Naive thymus-derived CD4-positive, alpha-beta T cell (primary cell): ENCODE measurements at regions of chr5 and their contacts with region 1.

Region 1: DNA sequence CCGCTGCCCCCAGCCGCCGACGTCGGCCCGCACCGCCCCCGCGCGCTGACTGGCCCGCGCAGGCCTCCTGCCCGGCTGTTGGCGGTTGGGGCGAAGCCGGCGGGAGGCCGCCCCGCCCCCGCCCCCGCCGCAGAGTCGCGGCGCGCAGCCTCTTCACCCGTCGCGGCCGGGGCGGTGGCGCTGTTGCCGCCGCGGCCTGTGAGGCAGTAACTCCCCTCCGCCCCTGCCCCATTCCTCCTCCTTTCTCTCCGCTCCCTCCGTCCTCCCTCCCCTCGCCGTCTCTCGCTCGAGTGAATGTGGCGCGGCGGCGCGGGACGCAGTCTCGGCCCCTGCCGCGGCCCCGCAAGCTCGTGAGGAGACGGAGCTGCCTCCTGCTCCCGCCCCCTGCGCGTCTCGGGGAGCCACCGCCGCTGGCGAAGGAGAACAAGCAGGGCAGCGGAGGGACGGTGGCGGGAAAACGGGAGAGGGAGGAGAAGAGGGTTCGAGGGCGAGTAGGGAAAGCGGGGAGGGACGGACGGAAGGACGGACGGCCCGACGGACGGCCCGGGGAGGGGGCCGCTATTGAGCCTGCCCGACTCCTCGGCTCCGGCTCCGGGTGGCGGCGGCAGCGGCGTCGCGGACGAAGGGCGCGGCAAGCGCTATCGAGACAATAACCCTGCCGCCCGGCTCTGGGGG is 637 bp upstream of the ERBIN start:
- DNase-seq: peak; percentile 72 to 85 (median 81)
- ATAC-seq: peak; percentile 87
- H3K4me3 ChIP-seq: peak overlapping the region; percentile 81
- H3K4me3 Mint-ChIP-seq: peak overlapping the region; percentile 88 to 98 (median 93)
- H3K27ac ChIP-seq: peak overlapping the region; percentile 96
- H3K27ac Mint-ChIP-seq: peak overlapping the region; percentile 64 to 97 (median 95)
- H3K4me1 ChIP-seq: peaks cover 17 to 19% of the 10 kb centered on the region in 2 donors
- H3K4me1 Mint-ChIP-seq: peaks cover 29 to 43% (median 40%) of the 10 kb centered on the region in 7 donors
- H3K27me3 ChIP-seq: no peaks in the 10 kb centered on the region
- H3K27me3 Mint-ChIP-seq: peaks cover 0 to 29% (median 0%) of the 10 kb centered on the region in 5 donors

Region 2: GRCh38 chr5:64768358-64769312 is 1157.1 kb before region 1 on chr5 and contains the starts of genes CWC27 and SREK1IP1:
- CTCF ChIA-PET with region 1: no interaction called
- POLR2A ChIA-PET with region 1: no interaction called
- intact Hi-C with region 1: loop called in 1 of 2 experiments (anchors 5 kb)
- DNase-seq: peak; percentile 65 to 88 (median 83)
- ATAC-seq: peak; percentile 98
- H3K4me3 ChIP-seq: peak within 1 kb of the TSS; percentile 90
- H3K4me3 Mint-ChIP-seq: peak within 1 kb of the TSS; percentile 94 to 100 (median 99)
- H3K27ac ChIP-seq: peak within 1 kb of the TSS; percentile 88
- H3K27ac Mint-ChIP-seq: peak within 1 kb of the TSS; percentile 96 to 100 (median 98)
- H3K4me1 ChIP-seq: peaks cover 21 to 37% of the 10 kb centered on the region in 2 donors
- H3K4me1 Mint-ChIP-seq: peaks cover 34 to 80% (median 77%) of the 10 kb centered on the region in 7 donors
- H3K27me3 ChIP-seq: no peaks in the 10 kb centered on the region
- H3K27me3 Mint-ChIP-seq: no peaks in the 10 kb centered on the region
- total RNA-seq, gene CWC27: 17.8 to 27.4 (median 21.0) TPM
- total RNA-seq, gene SREK1IP1: 11.7 to 29.9 (median 21.7) TPM

Region 3: GRCh38 chr5:65721720-65722574 is 203.8 kb before region 1 on chr5 and contains the starts of genes NLN and SGTB:
- CTCF ChIA-PET with region 1: interaction called, 3 read pairs
- POLR2A ChIA-PET with region 1: interaction called, 40 read pairs
- intact Hi-C with region 1: loop called (anchors 1 kb)
- DNase-seq: peak; percentile 65 to 93 (median 83)
- ATAC-seq: peak; percentile 97
- H3K4me3 ChIP-seq: peak within 1 kb of the TSS; percentile 75
- H3K4me3 Mint-ChIP-seq: peak within 1 kb of the TSS in 6 of 10 donors; percentile 85 to 97 (median 92)
- H3K27ac ChIP-seq: peak within 1 kb of the TSS; percentile 97
- H3K27ac Mint-ChIP-seq: peak within 1 kb of the TSS; percentile 74 to 91 (median 86)
- H3K4me1 ChIP-seq: peaks cover 22 to 33% of the 10 kb centered on the region in 2 donors
- H3K4me1 Mint-ChIP-seq: peaks cover 9 to 36% (median 15%) of the 10 kb centered on the region in 7 donors
- H3K27me3 ChIP-seq: no peaks in the 10 kb centered on the region
- H3K27me3 Mint-ChIP-seq: no peaks in the 10 kb centered on the region
- total RNA-seq, gene NLN: 3.5 to 11.9 (median 4.1) TPM
- total RNA-seq, gene SGTB: 12.8 to 59.5 (median 50.8) TPM

Region 4: GRCh38 chr5:65801352-65801783 is 124.4 kb before region 1 on chr5:
- CTCF ChIA-PET with region 1: no interaction called
- POLR2A ChIA-PET with region 1: interaction called, 4 read pairs
- intact Hi-C with region 1: loop called in 1 of 2 experiments (anchors 5 kb)
- DNase-seq: no peak
- ATAC-seq: no peak
- H3K4me3 ChIP-seq: no peak overlapping the region
- H3K4me3 Mint-ChIP-seq: no peak overlapping the region
- H3K27ac ChIP-seq: no peak overlapping the region
- H3K27ac Mint-ChIP-seq: peak overlapping the region in 1 of 9 donors; percentile 53
- H3K4me1 ChIP-seq: peaks cover 7 to 11% of the 10 kb centered on the region in 2 donors
- H3K4me1 Mint-ChIP-seq: peaks cover 17 to 36% (median 27%) of the 10 kb centered on the region in 7 donors
- H3K27me3 ChIP-seq: no peaks in the 10 kb centered on the region
- H3K27me3 Mint-ChIP-seq: no peaks in the 10 kb centered on the region

Region 5: DNA sequence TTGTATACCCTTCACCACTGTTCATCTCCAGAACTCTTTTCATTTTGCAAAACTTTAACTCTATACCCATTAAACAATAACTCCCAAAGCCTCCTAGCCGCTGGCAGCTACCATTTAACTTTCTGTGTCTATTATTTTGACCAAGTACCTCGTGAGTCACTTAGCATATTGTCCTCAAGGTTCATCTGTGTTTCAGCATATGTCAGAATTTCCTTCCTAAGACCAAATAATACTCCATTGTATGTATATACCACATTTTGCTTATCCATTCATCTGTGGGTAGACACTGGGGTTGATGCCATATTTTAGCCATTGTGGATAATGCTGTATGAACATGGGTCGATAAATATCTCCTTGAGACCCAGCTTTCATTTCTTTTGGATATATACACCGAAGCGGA is 18.0 kb after region 1 on chr5:
- CTCF ChIA-PET with region 1: interaction called, 4 read pairs
- POLR2A ChIA-PET with region 1: interaction called, 7 read pairs
- intact Hi-C with region 1: loop called in 1 of 2 experiments (anchors 1 kb)
- DNase-seq: no peak
- ATAC-seq: no peak
- H3K4me3 ChIP-seq: no peak overlapping the region
- H3K4me3 Mint-ChIP-seq: peak overlapping the region in 2 of 10 donors; percentile 39 to 42
- H3K27ac ChIP-seq: no peak overlapping the region
- H3K27ac Mint-ChIP-seq: peak overlapping the region in 3 of 9 donors; percentile 24 to 56 (median 34)
- H3K4me1 ChIP-seq: peaks cover 0 to 5% of the 10 kb centered on the region in 2 donors
- H3K4me1 Mint-ChIP-seq: peaks cover 5 to 66% (median 44%) of the 10 kb centered on the region in 7 donors
- H3K27me3 ChIP-seq: no peaks in the 10 kb centered on the region
- H3K27me3 Mint-ChIP-seq: no peaks in the 10 kb centered on the region

Region 6: GRCh38 chr5:65986050-65986451 is 60.3 kb after region 1 on chr5:
- CTCF ChIA-PET with region 1: no interaction called
- POLR2A ChIA-PET with region 1: interaction called, 3 read pairs
- intact Hi-C with region 1: loop called in 1 of 2 experiments (anchors 10 kb)
- DNase-seq: no peak
- ATAC-seq: no peak
- H3K4me3 ChIP-seq: no peak overlapping the region
- H3K4me3 Mint-ChIP-seq: peak overlapping the region in 5 of 10 donors; percentile 9 to 50 (median 22)
- H3K27ac ChIP-seq: no peak overlapping the region
- H3K27ac Mint-ChIP-seq: peak overlapping the region in 6 of 9 donors; percentile 46 to 84 (median 69)
- H3K4me1 ChIP-seq: peaks cover 4 to 10% of the 10 kb centered on the region in 2 donors
- H3K4me1 Mint-ChIP-seq: peaks cover 18 to 82% (median 52%) of the 10 kb centered on the region in 7 donors
- H3K27me3 ChIP-seq: no peaks in the 10 kb centered on the region
- H3K27me3 Mint-ChIP-seq: no peaks in the 10 kb centered on the region

Region 7: GRCh38 chr5:66828548-66829357 is 903.0 kb after region 1 on chr5:
- CTCF ChIA-PET with region 1: no interaction called
- POLR2A ChIA-PET with region 1: no interaction called
- intact Hi-C with region 1: loop called in 1 of 2 experiments (anchors 10 kb)
- DNase-seq: peak; percentile 14 to 67 (median 55)
- ATAC-seq: peak; percentile 93
- H3K4me3 ChIP-seq: peak overlapping the region; percentile 36
- H3K4me3 Mint-ChIP-seq: peak overlapping the region; percentile 72 to 95 (median 84)
- H3K27ac ChIP-seq: peak overlapping the region; percentile 31
- H3K27ac Mint-ChIP-seq: peak overlapping the region; percentile 12 to 92 (median 71)
- H3K4me1 ChIP-seq: peaks cover 0 to 4% of the 10 kb centered on the region in 2 donors
- H3K4me1 Mint-ChIP-seq: peaks cover 12 to 69% (median 19%) of the 10 kb centered on the region in 7 donors
- H3K27me3 ChIP-seq: no peaks in the 10 kb centered on the region
- H3K27me3 Mint-ChIP-seq: peaks cover 0 to 50% (median 26%) of the 10 kb centered on the region in 5 donors